GM12878 (cell line): ENCODE measurements at regions of chr10 and their contacts with region 1.

Region 1: GRCh38 chr10:93496322-93497041 is at the start of gene CEP55:
- DNase-seq: peak; percentile 74
- ATAC-seq: peak; percentile 99
- H3K4me3 ChIP-seq: peak within 1 kb of the TSS; percentile 88
- H3K27ac ChIP-seq: peak within 1 kb of the TSS; percentile 75
- H3K4me1 ChIP-seq: peaks cover 4% of the 10 kb centered on the region
- H3K27me3 ChIP-seq: no peaks in the 10 kb centered on the region
- CTCF ChIP-seq: no peak
- EP300 ChIP-seq: 0 out of 4 replicates have a peak, but pooled peaks of 1 of the 2 experiments have one; percentile 17
- POLR2A ChIP-seq: peak; percentile 90
- RAD21 ChIP-seq: no peak
- polyA plus RNA-seq, gene CEP55: 14.6 to 16.7 TPM

Region 2: DNA sequence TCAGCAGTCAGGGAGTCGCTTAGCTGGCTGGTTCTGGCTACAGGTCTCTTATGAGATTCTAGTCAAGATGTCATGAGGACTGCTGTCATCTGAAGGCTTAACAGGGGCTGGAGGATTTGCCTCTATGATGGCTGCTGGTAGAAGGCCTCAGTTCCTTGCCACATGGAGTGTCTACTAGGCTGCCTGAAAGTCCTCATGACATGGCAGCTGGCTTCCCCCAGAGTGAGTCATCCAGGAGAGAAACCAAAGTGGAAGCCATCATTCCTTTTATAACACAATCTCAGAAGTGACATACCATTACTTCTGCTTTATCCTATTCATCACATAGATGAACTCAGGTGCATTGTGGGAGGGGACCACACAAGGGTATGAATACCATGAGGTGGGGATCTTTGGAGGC is 573.1 kb before region 1 on chr10:
- CTCF ChIA-PET with region 1: no interaction called
- POLR2A ChIA-PET with region 1: no interaction called
- RAD21 ChIA-PET with region 1: no interaction called
- SMC1A ChIA-PET with region 1: no interaction called
- in situ Hi-C with region 1: no loop called
- intact Hi-C with region 1: no loop called
- DNase-seq: no peak
- ATAC-seq: no peak
- H3K4me3 ChIP-seq: no peak overlapping the region
- H3K27ac ChIP-seq: no peak overlapping the region
- H3K4me1 ChIP-seq: no peaks in the 10 kb centered on the region
- H3K27me3 ChIP-seq: no peaks in the 10 kb centered on the region
- CTCF ChIP-seq: no peak
- EP300 ChIP-seq: no peak
- POLR2A ChIP-seq: no peak
- RAD21 ChIP-seq: no peak

Region 3: GRCh38 chr10:93509816-93510215 is 13.3 kb after region 1 on chr10:
- CTCF ChIA-PET with region 1: interaction called, 45 read pairs
- POLR2A ChIA-PET with region 1: no interaction called
- RAD21 ChIA-PET with region 1: interaction called, 3 read pairs
- SMC1A ChIA-PET with region 1: interaction called, 20 read pairs
- in situ Hi-C with region 1: no loop called
- intact Hi-C with region 1: no loop called
- DNase-seq: no peak
- ATAC-seq: no peak
- H3K4me3 ChIP-seq: no peak overlapping the region
- H3K27ac ChIP-seq: no peak overlapping the region
- H3K4me1 ChIP-seq: no peaks in the 10 kb centered on the region
- H3K27me3 ChIP-seq: no peaks in the 10 kb centered on the region
- CTCF ChIP-seq: no peak
- EP300 ChIP-seq: no peak
- POLR2A ChIP-seq: no peak
- RAD21 ChIP-seq: no peak